Right ventricle myocardium inferior (tissue), 1 donor: ENCODE measurements at regions of chr16 and their contacts with region 1.

Region 1: DNA sequence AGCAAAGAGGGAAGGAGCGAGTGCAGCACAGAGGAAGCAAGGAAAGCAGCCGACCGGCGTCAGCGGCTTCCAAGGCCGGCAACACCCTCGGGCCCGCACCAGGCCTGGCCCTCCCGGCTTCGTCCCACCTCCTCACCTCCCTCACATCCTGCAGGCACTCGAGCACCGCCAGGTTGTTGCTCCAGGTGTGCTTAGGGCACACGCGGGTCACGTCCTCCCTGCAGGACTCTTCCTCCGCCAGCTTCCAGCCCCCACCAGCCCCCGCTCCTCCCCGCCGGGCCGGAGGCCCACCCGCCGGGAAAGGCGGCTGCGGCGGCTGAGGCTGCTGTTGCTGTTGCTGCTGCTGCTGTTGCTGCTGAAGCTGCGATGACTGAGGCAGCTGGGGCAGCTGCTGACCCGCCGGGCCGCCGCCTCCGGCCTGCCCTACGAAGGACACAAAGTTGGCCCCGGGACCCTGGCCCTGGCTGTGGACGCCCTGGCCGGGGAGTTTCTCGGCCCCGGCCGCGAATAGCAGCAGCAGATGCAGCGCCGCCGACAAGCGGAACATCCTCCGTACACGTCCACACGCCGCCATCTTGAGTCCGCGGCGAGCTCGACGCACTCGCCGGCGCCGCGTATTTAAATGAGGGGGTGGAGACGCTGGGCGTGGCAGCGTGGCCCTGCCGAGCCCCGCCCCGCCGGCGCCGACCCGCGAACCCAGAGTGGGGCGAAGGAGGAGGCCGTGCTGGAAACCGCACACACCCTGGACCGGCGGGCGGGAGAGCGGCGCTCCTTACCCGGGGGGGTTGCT is at the start of gene GLG1:
- DNase-seq: peak; percentile 97
- ATAC-seq: peak; percentile 99
- total RNA-seq, gene GLG1: 69.3 TPM

Region 2: GRCh38 chr16:74501484-74502479 is 104.9 kb before region 1 on chr16:
- intact Hi-C with region 1: loop called (anchors 5 kb)
- DNase-seq: no peak
- ATAC-seq: peak; percentile 91

Region 3: DNA sequence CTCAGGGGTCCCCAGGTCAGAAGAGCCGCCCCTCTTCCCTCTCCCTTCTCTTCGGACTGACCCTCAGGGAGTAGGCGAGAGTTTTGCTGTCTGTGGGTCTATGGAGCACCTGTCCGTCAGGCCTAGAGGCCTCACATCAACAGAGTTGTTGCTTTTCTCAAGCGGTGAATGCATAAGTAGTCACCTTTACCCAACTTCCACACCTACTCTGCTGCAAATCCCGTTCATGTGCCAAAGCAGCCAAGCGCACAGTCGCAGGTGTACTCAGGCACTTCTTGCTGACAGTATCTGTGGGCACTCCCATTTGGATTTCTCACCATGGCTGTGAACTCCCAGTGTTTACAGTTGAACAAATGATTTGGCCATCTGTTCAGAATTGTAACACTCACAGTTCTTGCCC is 171.9 kb after region 1 on chr16:
- intact Hi-C with region 1: no loop called
- DNase-seq: no peak
- ATAC-seq: no peak